ENCODE measurements at regions of chr18 and their contacts with region 1.

Region 1: DNA sequence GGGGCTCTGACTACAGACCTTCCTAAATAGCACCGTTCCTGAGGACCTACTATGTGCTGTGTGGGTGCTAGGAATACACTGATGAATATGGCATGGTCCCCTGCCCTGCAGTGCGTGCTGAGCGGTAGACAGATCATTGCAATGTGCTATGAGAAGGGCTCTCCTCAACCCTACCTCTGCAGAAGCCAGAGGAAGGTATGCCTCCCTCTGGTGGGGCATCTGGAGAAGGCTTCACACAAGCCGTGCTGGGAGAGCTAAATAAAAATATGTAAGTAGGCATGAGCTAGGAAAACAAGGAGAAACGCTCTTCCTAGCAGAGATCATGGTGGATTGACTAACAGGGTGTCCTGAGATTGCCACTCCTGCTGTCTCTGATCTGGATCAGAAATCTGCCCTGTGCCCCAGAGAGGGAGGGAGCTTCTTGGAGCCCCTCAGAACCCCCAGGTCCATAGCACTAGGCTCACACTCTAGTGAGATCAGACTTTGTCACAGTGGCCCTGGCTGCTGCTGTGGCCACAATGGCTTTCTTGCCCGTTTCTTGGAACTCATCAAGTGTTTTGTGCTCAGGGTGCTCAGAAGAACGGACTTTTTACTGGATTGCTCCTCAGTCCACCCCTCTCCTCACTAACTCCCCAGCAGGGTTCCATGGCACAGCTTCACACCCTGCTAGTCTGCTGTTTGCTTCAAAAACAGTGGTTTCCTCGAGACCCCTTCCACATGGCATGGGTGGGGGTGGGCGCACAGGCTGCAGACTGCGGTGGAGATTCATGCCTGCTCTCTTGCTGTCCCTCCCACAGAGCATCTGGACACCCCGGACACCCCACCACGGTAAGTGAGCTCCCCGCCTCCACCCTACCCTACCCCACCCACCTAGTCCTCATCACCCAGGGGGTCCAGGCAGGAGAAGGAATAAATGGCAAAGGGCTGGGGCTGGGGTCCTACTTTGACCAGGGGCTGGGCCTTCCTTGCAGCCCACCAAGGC is 14.2 kb downstream of the SIGLEC15 start:
- DNase-seq: peak in 1 of 2 experiments; percentile 52
- H3K4me3 ChIP-seq: no peak overlapping the region
- H3K27ac ChIP-seq: no peak overlapping the region
- H3K4me1 ChIP-seq: peaks cover 6 to 19% (median 10%) of the 10 kb centered on the region in 4 experiments
- H3K27me3 ChIP-seq: peaks cover 8 to 32% (median 25%) of the 10 kb centered on the region in 4 experiments
- CTCF ChIP-seq: peak; percentile 50 to 79 (median 78)
- EP300 ChIP-seq: no peak
- POLR2A ChIP-seq: no peak
- RAD21 ChIP-seq: peak; percentile 80 to 83

Region 2: GRCh38 chr18:45722899-45723298 is 116.8 kb before region 1 on chr18:
- CTCF ChIA-PET with region 1: interaction called, 40 read pairs
- POLR2A ChIA-PET with region 1: no interaction called
- DNase-seq: peak; percentile 56 to 95
- H3K4me3 ChIP-seq: no peak overlapping the region
- H3K27ac ChIP-seq: no peak overlapping the region
- H3K4me1 ChIP-seq: peaks cover 0 to 4% (median 0%) of the 10 kb centered on the region in 4 experiments; a peak in 1 of 7 replicates
- H3K27me3 ChIP-seq: no peaks in the 10 kb centered on the region
- CTCF ChIP-seq: peak; percentile 88 to 98 (median 91)
- EP300 ChIP-seq: no peak
- POLR2A ChIP-seq: no peak
- RAD21 ChIP-seq: peak; percentile 90 to 96

Region 3: DNA sequence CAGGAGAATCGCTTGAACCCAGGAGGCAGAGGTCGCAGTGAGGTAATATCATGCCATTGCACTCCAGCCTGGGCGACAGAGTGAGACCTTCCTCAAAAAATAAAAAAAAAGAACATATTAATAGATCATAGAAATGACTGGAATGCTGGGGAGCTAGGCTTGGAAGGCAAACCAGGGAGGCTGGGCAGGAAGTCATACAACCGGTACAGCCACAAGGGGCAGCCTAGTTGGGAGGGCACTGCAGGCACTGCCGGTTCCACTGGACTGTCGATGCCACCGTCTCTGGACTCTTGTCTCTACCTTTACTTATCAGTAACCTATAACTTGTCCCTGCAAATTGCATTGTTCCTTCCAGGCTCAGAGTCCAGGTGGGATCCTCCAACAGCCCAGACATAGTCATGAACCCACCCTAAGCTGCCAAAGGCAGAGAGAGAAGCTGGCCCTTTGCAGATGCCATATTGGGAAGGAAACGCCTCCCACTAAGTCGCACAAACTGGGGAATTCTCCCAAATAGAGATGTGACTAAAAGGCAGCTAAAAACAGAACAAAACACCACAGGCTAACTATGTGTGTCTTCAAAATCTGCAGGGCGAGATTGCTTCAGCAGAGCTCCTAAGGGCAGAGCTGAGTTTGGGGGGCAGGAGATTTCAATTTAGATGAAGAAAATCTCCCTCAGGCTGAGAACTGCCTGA is 52.9 kb before region 1 on chr18:
- CTCF ChIA-PET with region 1: interaction called, 12 read pairs
- POLR2A ChIA-PET with region 1: no interaction called
- DNase-seq: no peak
- H3K4me3 ChIP-seq: no peak overlapping the region
- H3K27ac ChIP-seq: no peak overlapping the region
- H3K4me1 ChIP-seq: peaks cover 0 to 11% (median 6%) of the 10 kb centered on the region in 4 experiments; a peak in 4 of 7 replicates
- H3K27me3 ChIP-seq: no peaks in the 10 kb centered on the region
- CTCF ChIP-seq: peak in 2 of 3 experiments; percentile 21 to 36; a peak in 2 of 4 replicates
- EP300 ChIP-seq: no peak
- POLR2A ChIP-seq: no peak
- RAD21 ChIP-seq: no peak

Region 4: DNA sequence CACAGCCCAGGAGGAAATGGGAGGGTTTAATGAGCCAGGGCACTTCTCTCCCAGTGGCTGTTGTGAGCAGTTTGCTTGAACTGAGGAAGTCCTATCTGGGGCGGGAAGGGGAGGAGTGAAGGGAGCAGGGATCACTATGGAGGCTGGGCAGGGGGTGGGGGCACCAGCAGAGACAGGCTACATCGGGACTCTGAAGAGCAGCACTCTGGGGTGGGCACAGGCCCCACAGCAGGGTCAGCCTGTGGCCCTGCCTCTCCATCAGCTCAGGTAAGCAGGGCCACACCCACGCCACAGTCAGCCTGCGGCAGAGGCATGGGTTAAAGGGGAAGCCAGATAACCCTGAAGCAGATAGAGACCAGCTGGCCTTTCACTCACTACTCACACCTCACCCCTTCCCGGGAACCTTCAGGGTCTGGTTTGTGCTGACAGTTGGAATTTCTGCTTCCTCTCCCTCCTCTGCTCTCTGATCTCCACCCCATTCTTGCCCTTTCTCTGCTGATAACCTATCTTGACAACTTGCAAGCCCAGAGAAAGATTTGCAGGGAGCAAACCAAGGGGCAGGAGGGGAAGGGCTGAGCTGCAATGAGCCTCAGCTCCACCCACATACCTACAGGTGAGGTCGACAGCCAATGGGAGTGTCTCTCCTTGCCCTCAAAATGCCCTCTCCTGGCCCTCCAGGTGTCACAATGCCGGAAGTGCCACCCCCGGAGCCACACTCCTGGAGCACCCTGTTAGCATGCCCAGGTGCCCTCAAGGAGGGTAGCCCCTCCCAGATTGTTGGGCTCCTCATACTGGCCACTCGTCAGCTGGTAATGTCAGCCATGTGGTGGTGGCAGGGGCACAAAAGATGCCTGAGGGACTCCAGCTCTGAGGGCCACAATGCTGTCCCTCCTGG is 10.5 kb before region 1 on chr18:
- CTCF ChIA-PET with region 1: interaction called, 17 read pairs
- POLR2A ChIA-PET with region 1: no interaction called
- DNase-seq: peak in 1 of 2 experiments; percentile 49
- H3K4me3 ChIP-seq: no peak overlapping the region
- H3K27ac ChIP-seq: no peak overlapping the region
- H3K4me1 ChIP-seq: peaks cover 0 to 20% (median 6%) of the 10 kb centered on the region in 4 experiments; a peak in 6 of 7 replicates
- H3K27me3 ChIP-seq: no peaks in the 10 kb centered on the region
- CTCF ChIP-seq: no peak
- EP300 ChIP-seq: no peak
- POLR2A ChIP-seq: no peak
- RAD21 ChIP-seq: no peak